Naive thymus-derived CD4-positive, alpha-beta T cell (primary cell): ENCODE measurements at regions of chr18 and their contacts with region 1.

Region 1: DNA sequence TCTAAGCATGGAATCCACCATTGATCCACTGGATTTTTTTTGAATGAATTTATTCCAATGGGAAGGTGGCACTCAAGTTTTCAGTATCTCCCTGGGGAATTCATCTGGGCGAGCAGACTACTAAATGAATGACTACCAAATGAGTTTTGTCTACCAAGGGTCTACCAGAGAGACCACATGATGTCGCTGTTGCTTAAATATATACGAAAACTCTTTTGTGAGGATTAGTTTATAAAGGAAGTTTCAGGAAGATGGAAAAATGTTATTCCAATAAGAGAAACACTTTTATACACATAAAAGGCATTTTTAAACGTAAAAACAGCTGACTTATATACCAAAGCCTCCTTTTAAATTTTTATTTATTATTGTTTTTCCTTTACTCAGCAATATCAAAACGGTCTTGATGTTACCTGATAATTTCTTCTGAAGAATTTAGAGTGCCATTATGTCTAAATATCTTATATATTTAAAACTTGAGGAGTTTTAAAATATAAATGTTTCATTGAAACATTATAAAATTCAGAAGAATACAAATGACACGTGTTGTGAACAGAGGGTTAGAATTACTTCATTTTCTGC is 139.7 kb downstream of the HRH4 start:
- DNase-seq: peak in 5 of 9 donors; percentile 7 to 25 (median 14)
- ATAC-seq: no peak
- H3K4me3 ChIP-seq: no peak overlapping the region
- H3K4me3 Mint-ChIP-seq: no peak overlapping the region
- H3K27ac ChIP-seq: no peak overlapping the region
- H3K27ac Mint-ChIP-seq: no peak overlapping the region
- H3K4me1 ChIP-seq: no peaks in the 10 kb centered on the region
- H3K4me1 Mint-ChIP-seq: no peaks in the 10 kb centered on the region
- H3K27me3 ChIP-seq: no peaks in the 10 kb centered on the region
- H3K27me3 Mint-ChIP-seq: peaks cover 12 to 24% (median 13%) of the 10 kb centered on the region in 5 donors

Region 2: GRCh38 chr18:24118750-24119577 is 481.2 kb before region 1 on chr18:
- CTCF ChIA-PET with region 1: no interaction called
- POLR2A ChIA-PET with region 1: no interaction called
- intact Hi-C with region 1: no loop called
- DNase-seq: peak; percentile 49 to 82 (median 74)
- ATAC-seq: peak; percentile 98
- H3K4me3 ChIP-seq: no peak overlapping the region
- H3K4me3 Mint-ChIP-seq: no peak overlapping the region
- H3K27ac ChIP-seq: no peak overlapping the region
- H3K27ac Mint-ChIP-seq: peak overlapping the region in 7 of 9 donors; percentile 2 to 82 (median 61)
- H3K4me1 ChIP-seq: peaks cover 0 to 6% of the 10 kb centered on the region in 2 donors
- H3K4me1 Mint-ChIP-seq: peaks cover 1 to 41% (median 22%) of the 10 kb centered on the region in 7 donors
- H3K27me3 ChIP-seq: no peaks in the 10 kb centered on the region
- H3K27me3 Mint-ChIP-seq: no peaks in the 10 kb centered on the region

Region 3: DNA sequence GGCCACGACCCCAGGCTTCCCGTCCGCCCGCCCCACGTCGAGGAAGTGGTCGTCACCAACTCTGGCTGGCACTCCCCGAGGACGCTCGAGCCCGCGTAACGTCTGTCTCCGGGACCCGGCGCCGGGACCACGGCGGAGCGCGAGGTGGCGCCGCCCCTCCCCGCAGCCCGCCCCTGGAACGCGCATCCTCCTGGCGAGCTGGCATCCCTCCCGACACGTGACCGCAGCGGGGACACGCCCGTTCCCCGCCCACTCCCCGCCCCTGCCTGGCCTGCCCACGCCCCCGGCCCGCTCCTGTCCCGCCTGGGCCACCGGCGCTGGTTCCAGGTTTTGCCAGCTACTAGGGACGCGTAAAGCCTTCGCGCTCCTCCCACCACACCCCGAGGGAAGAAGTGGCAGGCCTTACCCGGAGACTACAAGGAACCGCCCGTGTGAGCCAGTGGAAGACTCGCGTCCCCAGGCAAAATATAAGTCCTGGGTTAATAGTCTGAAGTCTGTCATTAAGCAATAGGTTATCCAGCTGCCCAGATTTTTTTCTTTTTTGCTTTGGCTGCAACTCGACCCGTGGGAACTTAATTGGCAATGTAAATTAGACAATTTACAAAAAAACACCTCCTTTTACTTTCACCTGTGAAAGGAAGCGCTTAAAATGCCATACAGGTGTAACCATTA is 202.3 kb before region 1 on chr18 and contains the start of gene OSBPL1A:
- CTCF ChIA-PET with region 1: no interaction called
- POLR2A ChIA-PET with region 1: no interaction called
- intact Hi-C with region 1: no loop called
- DNase-seq: peak; percentile 50 to 68 (median 63)
- ATAC-seq: peak; percentile 95
- H3K4me3 ChIP-seq: peak within 1 kb of the TSS; percentile 71
- H3K4me3 Mint-ChIP-seq: peak within 1 kb of the TSS; percentile 82 to 91 (median 88)
- H3K27ac ChIP-seq: no peak within 1 kb of the TSS
- H3K27ac Mint-ChIP-seq: peak within 1 kb of the TSS in 6 of 9 donors; percentile 7 to 84 (median 33)
- H3K4me1 ChIP-seq: peaks cover 0 to 6% of the 10 kb centered on the region in 2 donors
- H3K4me1 Mint-ChIP-seq: peaks cover 0 to 24% (median 12%) of the 10 kb centered on the region in 7 donors
- H3K27me3 ChIP-seq: no peaks in the 10 kb centered on the region
- H3K27me3 Mint-ChIP-seq: peaks cover 5 to 40% (median 10%) of the 10 kb centered on the region in 5 donors
- total RNA-seq, gene OSBPL1A: 1.8 to 7.7 (median 4.3) TPM

Region 4: DNA sequence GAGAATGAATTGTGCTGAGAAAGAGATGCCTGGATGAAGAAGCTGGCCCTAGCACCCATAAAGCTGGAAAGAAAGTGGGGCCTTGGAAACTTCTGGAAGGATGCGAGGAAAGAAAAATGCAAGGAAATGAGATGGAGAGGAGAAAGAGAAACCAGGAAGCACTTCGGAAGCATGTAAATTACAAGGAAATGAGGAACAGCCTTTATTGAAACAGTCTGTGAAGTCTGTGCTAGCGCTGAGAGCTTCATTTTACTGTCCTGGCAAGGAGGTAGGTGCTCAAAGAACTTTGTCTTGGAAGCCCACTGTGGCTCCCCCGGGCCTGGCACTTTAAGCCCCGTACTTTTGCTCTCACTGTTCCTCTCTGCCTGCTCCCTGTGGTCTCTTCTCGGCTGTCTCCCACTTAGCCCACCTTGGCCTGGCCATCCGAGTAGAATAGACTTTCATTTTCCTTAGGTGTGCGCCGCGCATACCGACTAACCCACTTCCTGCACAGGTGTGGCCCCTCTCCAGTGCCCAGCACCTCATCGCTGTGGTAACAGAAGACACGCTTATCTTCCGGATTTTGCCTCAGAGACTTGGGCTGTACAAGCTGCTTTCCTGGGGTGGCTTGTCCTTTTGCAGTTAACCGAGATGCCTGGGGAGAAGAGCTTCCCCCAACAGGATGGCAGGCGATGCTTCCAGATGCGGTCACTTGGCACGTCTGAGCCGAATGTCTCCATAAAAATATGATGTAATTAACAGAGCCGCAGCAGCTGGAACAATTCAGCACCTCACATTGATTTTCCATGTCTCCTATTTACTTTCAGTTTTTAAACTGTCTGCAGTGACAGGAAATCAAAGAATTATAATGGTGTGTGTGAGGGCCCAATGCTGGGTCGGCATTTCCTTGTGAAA is 59.9 kb after region 1 on chr18:
- CTCF ChIA-PET with region 1: no interaction called
- POLR2A ChIA-PET with region 1: no interaction called
- intact Hi-C with region 1: loop called in 1 of 2 experiments (anchors 1 kb)
- DNase-seq: peak in 8 of 9 donors; percentile 12 to 64 (median 44)
- ATAC-seq: peak; percentile 74
- H3K4me3 ChIP-seq: peak overlapping the region; percentile 17
- H3K4me3 Mint-ChIP-seq: peak overlapping the region; percentile 83 to 96 (median 92)
- H3K27ac ChIP-seq: peak overlapping the region; percentile 51
- H3K27ac Mint-ChIP-seq: peak overlapping the region; percentile 75 to 97 (median 87)
- H3K4me1 ChIP-seq: peaks cover 10 to 13% of the 10 kb centered on the region in 2 donors
- H3K4me1 Mint-ChIP-seq: peaks cover 8 to 35% (median 20%) of the 10 kb centered on the region in 7 donors
- H3K27me3 ChIP-seq: no peaks in the 10 kb centered on the region
- H3K27me3 Mint-ChIP-seq: peaks cover 4 to 13% (median 5%) of the 10 kb centered on the region in 5 donors

Region 5: GRCh38 chr18:24672165-24672941 is 72.2 kb after region 1 on chr18:
- CTCF ChIA-PET with region 1: interaction called, 3 read pairs
- POLR2A ChIA-PET with region 1: no interaction called
- intact Hi-C with region 1: loop called (anchors 1 to 5 kb)
- DNase-seq: peak in 3 of 9 donors; percentile 4 to 21 (median 15)
- ATAC-seq: no peak
- H3K4me3 ChIP-seq: no peak overlapping the region
- H3K4me3 Mint-ChIP-seq: no peak overlapping the region
- H3K27ac ChIP-seq: no peak overlapping the region
- H3K27ac Mint-ChIP-seq: no peak overlapping the region
- H3K4me1 ChIP-seq: no peaks in the 10 kb centered on the region
- H3K4me1 Mint-ChIP-seq: no peaks in the 10 kb centered on the region
- H3K27me3 ChIP-seq: no peaks in the 10 kb centered on the region
- H3K27me3 Mint-ChIP-seq: peaks cover 6 to 18% (median 11%) of the 10 kb centered on the region in 5 donors

Region 6: DNA sequence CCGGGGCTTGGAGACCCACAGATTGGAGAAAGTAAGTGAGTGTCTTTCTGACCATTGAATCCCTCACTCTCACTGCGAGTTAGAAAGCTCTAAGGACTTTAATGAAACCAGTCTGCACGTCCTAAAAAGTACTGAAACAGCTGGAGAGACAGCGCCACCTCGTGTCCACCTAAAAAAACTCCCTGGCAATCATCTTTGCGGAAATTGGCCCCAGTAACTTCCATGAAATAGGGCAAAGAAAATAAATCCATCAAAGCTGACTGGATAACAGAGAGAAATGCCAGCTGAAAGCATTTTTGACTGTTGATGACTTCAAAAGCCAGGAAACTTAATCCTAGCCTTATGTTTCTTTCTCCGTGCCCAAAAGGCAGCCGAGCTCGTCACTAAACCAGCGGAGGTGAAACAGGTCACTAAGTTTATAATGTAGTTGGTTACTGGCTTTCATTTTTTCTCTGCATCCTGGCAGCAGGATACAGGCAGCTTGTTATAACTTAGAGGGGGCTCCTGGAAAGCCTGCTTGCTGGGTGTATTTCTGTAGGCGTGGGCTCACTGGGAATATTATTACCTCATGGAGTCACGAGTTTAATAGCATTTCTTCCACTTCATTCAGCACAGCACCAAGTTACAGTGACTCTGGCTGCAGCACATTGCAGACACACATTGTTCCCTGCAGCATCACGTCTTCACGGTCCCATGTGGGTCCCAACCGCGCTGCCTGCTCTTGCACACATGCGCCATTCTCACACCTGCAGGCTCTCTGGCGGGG is 126.7 kb after region 1 on chr18:
- CTCF ChIA-PET with region 1: interaction called, 4 read pairs
- POLR2A ChIA-PET with region 1: no interaction called
- intact Hi-C with region 1: loop called (anchors 1 kb)
- DNase-seq: peak in 8 of 9 donors; percentile 8 to 53 (median 38)
- ATAC-seq: no peak
- H3K4me3 ChIP-seq: no peak overlapping the region
- H3K4me3 Mint-ChIP-seq: peak overlapping the region in 1 of 10 donors; percentile 6
- H3K27ac ChIP-seq: no peak overlapping the region
- H3K27ac Mint-ChIP-seq: no peak overlapping the region
- H3K4me1 ChIP-seq: peaks cover 0 to 5% of the 10 kb centered on the region in 2 donors
- H3K4me1 Mint-ChIP-seq: peaks cover 0 to 3% (median 0%) of the 10 kb centered on the region in 7 donors
- H3K27me3 ChIP-seq: peaks cover 0 to 2% of the 10 kb centered on the region in 2 donors
- H3K27me3 Mint-ChIP-seq: peaks cover 0 to 27% (median 15%) of the 10 kb centered on the region in 5 donors